ENCODE measurements at regions of chr20 and their contacts with region 1.

Region 1: DNA sequence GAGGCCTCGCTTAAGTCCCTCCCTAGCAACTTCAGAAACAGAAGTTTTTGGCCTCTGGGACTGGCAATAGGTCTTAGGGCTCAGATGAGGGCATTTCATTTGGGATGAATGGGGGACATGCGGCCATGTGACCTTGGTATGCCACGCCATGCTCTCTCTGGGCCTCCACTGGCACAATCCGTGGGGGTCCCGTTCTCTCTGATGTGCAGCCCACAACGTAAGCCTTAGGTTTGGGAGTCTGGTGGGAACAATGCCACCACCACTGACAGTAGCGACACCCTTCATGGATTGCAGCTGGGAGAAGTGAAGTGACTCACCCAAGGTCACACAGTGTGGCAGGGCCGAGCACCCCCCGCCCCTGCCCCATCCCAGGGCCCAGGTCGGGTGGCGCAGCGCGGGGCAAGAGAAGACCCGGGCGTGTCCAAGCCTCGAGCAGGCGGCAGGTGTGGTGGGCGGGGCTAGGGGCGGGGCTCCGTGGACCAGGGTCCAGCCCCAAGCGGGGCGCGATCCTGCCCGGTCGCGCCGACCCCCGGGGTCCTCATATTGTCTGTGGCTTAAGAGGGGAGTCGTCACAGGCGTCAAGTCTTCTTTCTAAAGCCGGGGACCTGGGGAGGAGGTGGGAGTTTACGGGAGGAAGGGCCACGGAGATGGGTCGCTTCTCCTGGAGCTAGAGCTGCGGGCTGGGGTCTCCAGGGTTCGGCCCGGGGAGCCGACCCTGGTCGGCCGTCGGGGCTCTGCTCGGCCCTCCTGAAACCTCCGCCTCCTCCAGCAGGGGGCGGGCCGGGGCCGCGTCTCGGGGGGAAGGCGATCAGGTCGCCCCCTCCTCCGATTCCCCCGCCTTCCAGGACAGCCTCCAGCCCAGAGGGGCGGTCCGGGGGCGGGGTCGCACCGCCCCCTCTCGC is 698 bp upstream of the CEBPB start:
- DNase-seq: peak; percentile 90
- H3K4me3 ChIP-seq: peak overlapping the region; percentile 97
- H3K27ac ChIP-seq: peak overlapping the region; percentile 95
- H3K4me1 ChIP-seq: peaks cover 16% of the 10 kb centered on the region
- CTCF ChIP-seq: peak; percentile 75

Region 2: DNA sequence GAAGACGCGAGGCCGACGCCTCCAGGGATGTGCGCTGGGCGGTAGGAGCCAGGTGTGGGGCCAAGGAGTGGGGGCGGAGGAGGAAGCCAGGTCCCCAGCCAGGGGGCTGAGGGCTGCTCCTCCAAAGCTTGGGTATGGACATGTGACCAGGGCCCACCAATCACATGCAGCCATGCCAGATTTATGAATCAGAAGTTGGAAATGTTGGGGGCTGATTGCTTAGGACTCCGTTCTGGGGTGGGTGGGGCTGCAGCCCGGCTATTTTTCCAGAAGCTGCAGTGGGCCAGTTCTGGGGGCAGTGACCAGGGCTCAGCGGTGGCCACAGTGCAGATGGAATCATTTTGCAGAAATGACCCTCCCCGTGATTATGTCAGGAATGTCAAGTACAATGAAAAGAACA is 96.7 kb after region 1 on chr20:
- CTCF ChIA-PET with region 1: no interaction called
- POLR2A ChIA-PET with region 1: no interaction called
- intact Hi-C with region 1: loop called (anchors 5 kb)
- DNase-seq: peak; percentile 41
- H3K4me3 ChIP-seq: no peak overlapping the region
- H3K27ac ChIP-seq: no peak overlapping the region
- H3K4me1 ChIP-seq: peaks cover 22% of the 10 kb centered on the region
- CTCF ChIP-seq: no peak

Region 3: DNA sequence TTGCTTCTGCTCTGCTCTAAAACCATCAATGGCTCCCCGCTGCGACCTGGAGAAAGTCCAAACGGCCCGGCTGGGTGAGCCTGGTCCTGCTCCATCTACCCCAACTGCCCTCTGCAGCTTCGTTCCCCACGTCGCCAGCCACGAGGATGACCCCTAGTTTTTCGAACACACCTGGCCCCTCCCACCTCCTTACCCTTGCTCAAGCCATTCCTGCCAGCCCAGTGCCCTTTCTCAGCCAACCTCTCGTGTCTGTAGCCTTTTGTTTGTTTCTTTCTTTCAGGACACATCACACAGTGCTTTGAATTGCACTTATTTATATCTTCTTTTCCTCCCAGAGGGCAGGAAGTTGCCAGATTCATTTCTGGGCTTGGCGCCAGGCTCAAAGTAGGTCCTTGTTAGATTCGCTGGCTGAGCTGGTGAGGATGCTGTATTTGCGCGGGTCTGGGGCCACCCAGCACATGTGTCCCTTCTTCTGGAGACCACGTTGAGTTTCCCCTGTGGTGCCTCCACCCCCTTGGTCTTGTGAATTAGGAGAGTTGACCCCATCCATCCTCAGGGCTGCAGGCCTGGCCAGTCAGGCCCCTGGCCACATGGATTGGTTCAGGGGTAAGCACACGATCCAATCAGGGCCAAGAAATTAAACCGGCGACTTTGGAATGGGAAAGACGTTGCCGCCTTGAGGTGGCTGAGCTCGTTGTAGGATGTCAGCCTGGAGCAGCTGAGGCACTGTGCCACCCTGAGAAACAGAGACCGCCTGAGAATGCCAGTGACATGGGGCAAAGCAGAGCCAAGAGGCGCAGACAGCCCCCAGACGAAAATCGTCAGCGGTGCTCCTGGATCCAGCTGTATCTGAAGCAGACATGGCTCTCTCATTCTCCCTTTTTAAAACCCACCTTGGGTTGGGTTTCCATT is 156.7 kb after region 1 on chr20:
- CTCF ChIA-PET with region 1: no interaction called
- POLR2A ChIA-PET with region 1: no interaction called
- intact Hi-C with region 1: loop called (anchors 5 kb)
- DNase-seq: no peak
- H3K4me3 ChIP-seq: no peak overlapping the region
- H3K27ac ChIP-seq: no peak overlapping the region
- H3K4me1 ChIP-seq: no peaks in the 10 kb centered on the region
- CTCF ChIP-seq: no peak

Region 4: GRCh38 chr20:50460460-50461267 is 270.7 kb after region 1 on chr20:
- CTCF ChIA-PET with region 1: no interaction called
- POLR2A ChIA-PET with region 1: no interaction called
- intact Hi-C with region 1: loop called (anchors 1 kb)
- DNase-seq: peak; percentile 59
- H3K4me3 ChIP-seq: no peak overlapping the region
- H3K27ac ChIP-seq: no peak overlapping the region
- H3K4me1 ChIP-seq: no peaks in the 10 kb centered on the region
- CTCF ChIP-seq: peak; percentile 83

Region 5: DNA sequence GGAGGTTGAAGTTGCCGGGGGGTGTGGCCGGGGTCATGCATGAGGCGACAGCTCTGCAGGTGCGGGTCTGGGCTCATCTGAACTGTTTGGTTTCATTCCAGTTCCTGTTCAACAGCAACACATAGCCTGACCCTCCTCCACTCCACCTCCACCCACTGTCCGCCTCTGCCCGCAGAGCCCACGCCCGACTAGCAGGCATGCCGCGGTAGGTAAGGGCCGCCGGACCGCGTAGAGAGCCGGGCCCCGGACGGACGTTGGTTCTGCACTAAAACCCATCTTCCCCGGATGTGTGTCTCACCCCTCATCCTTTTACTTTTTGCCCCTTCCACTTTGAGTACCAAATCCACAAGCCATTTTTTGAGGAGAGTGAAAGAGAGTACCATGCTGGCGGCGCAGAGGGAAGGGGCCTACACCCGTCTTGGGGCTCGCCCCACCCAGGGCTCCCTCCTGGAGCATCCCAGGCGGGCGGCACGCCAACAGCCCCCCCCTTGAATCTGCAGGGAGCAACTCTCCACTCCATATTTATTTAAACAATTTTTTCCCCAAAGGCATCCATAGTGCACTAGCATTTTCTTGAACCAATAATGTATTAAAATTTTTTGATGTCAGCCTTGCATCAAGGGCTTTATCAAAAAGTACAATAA is 392.8 kb after region 1 on chr20:
- CTCF ChIA-PET with region 1: no interaction called
- POLR2A ChIA-PET with region 1: no interaction called
- intact Hi-C with region 1: loop called (anchors 2 kb)
- DNase-seq: peak; percentile 89
- H3K4me3 ChIP-seq: peak overlapping the region; percentile 15
- H3K27ac ChIP-seq: peak overlapping the region; percentile 66
- H3K4me1 ChIP-seq: peaks cover 29% of the 10 kb centered on the region
- CTCF ChIP-seq: no peak

Region 6: DNA sequence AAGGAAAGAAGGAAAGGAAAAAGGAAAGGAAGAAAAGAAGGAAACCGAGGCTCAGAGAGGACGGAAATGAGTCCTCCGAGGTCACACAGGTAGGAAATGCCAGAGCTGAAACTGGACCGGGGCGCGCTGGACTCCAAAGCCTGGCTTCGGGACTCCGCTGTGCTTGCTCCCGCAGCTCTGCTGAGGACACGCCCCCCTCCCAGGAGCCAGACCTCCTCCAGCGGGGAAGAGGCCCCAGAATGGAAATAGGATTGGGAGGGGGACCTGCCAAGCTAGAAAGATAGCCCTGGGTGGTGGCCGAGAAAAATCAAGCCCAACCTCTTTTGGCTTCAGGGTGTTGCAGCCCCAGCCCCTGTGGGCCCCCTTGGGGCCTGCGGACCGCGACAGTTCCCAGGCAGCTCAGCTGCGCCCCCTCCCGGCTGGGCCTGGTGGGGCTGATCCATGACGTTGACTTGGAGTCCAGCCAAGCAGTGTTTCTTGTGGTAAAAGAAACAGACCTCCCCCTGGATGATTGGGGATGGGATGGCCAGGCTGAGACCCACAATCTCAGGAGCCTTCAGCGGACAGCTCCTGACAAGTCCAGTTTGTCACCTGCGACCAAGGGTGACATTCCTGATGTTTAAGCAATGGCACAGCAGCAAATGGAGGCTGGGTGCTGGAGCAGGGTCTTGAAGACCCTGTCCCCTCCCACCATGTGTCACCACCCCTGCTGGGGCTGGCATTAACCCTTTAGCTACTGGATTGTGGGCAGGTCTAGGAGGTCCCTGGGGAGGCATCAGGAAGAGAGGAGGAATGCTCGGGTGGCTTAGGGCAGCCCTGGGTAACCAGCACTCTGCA is 446.0 kb after region 1 on chr20:
- CTCF ChIA-PET with region 1: no interaction called
- POLR2A ChIA-PET with region 1: no interaction called
- intact Hi-C with region 1: loop called (anchors 5 kb)
- DNase-seq: peak; percentile 59
- H3K4me3 ChIP-seq: no peak overlapping the region
- H3K27ac ChIP-seq: no peak overlapping the region
- H3K4me1 ChIP-seq: no peaks in the 10 kb centered on the region
- CTCF ChIP-seq: peak; percentile 93

Region 7: GRCh38 chr20:50731055-50731871 is 541.3 kb after region 1 on chr20 and contains the start of gene PARD6B:
- CTCF ChIA-PET with region 1: no interaction called
- POLR2A ChIA-PET with region 1: no interaction called
- intact Hi-C with region 1: loop called (anchors 5 kb)
- DNase-seq: peak; percentile 100
- H3K4me3 ChIP-seq: peak within 1 kb of the TSS; percentile 75
- H3K27ac ChIP-seq: peak within 1 kb of the TSS; percentile 24
- H3K4me1 ChIP-seq: peaks cover 29% of the 10 kb centered on the region
- CTCF ChIP-seq: no peak
- total RNA-seq, gene PARD6B: 4.4 and 5.8 TPM in 2 replicates